ENCODE measurements at regions of chr1 and their contacts with region 1.

Region 1: GRCh38 chr1:44792783-44793714 is 5.1 kb upstream of the BEST4 start:
- DNase-seq: no peak
- H3K4me3 ChIP-seq: no peak overlapping the region
- H3K4me3 Mint-ChIP-seq: peak overlapping the region in 1 of 7 donors; percentile 3
- H3K27ac ChIP-seq: no peak overlapping the region
- H3K27ac Mint-ChIP-seq: peak overlapping the region in 5 of 8 donors; percentile 10 to 86 (median 77)
- H3K4me1 ChIP-seq: no peaks in the 10 kb centered on the region
- H3K4me1 Mint-ChIP-seq: peaks cover 0 to 2% (median 1%) of the 10 kb centered on the region in 3 donors
- H3K27me3 ChIP-seq: no peaks in the 10 kb centered on the region
- H3K27me3 Mint-ChIP-seq: no peaks in the 10 kb centered on the region

Region 2: GRCh38 chr1:44812822-44813543 is 19.9 kb after region 1 on chr1:
- CTCF ChIA-PET with region 1: interaction called, 112 read pairs
- POLR2A ChIA-PET with region 1: interaction called, 122 read pairs
- DNase-seq: peak in 1 of 5 donors; percentile 45
- H3K4me3 ChIP-seq: no peak overlapping the region
- H3K4me3 Mint-ChIP-seq: peak overlapping the region in 6 of 7 donors; percentile 62 to 96 (median 88)
- H3K27ac ChIP-seq: no peak overlapping the region
- H3K27ac Mint-ChIP-seq: peak overlapping the region in 6 of 8 donors; percentile 8 to 100 (median 70)
- H3K4me1 ChIP-seq: peaks cover 52% of the 10 kb centered on the region
- H3K4me1 Mint-ChIP-seq: peaks cover 59 to 67% (median 66%) of the 10 kb centered on the region in 3 donors
- H3K27me3 ChIP-seq: no peaks in the 10 kb centered on the region
- H3K27me3 Mint-ChIP-seq: peaks cover 0 to 7% of the 10 kb centered on the region in 2 donors